ENCODE measurements at regions of chr16 and their contacts with region 1.

Region 1: DNA sequence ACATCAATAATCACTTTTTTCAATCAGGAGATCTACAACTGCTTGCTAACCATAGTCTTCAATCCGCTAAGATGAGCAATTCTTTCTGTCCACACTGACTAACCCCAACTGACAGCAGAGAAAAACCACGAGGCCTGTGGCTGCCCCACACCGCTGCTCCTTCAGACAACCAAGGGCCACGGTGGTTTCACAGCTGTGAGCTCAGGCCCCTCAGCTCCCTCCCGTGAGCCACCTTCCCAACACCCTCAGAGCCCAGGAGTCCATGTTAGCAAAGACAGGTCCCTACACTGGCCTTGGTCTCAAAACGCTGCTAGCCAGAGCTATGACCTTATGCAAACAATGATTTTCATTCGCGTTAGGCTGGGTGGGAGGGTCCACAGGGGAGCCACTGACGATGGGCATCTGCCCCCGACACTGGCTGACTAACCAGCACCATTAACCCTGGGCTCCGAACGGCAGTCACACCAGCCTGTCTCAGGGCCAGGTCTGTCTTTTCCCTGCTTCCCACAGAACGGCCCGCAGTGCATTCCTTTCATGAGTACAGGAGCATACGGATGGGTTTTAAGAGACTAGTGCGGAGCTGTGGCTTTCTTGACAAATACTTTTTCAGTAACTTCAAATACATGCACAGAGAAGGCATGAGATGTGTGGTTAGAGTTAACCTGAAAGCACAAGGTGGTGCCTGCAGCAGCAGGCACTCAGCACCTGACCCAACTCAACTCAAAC is 67.3 kb downstream of the ANKRD11 start:
- DNase-seq: no peak
- H3K4me3 ChIP-seq: no peak overlapping the region
- H3K27ac ChIP-seq: no peak overlapping the region
- H3K4me1 ChIP-seq: peaks cover 6 to 30% (median 17%) of the 10 kb centered on the region in 4 experiments; a peak in 6 of 7 replicates
- H3K27me3 ChIP-seq: no peaks in the 10 kb centered on the region
- CTCF ChIP-seq: no peak
- EP300 ChIP-seq: no peak
- POLR2A ChIP-seq: no peak
- RAD21 ChIP-seq: no peak

Region 2: DNA sequence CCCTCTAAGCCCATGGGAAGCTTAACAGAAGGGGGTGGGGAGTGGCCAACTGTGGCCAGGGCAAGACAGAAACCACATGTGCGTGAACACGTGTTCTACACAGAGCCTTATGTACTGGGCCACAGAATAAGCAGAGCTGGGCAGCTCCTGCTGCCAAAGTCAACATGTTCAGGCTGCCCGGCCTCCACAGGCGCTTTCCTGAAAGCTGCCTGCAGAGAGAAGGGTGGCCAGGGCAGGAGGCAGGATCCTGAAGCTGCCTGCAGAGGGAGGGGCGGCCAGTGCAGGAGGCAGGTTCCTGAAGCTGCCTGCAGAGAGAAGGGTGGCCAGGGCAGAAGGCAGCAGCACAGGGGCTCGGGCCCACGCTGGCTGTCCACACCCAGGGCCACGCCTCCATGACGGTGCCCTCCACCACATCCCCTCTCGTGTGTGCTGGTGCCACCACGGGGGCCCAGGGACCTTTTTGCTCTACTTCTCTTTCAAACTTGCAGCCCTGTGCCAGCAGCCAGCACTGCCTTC is 12.2 kb before region 1 on chr16:
- CTCF ChIA-PET with region 1: interaction called, 8 read pairs
- POLR2A ChIA-PET with region 1: interaction called, 10 read pairs
- DNase-seq: no peak
- H3K4me3 ChIP-seq: no peak overlapping the region
- H3K27ac ChIP-seq: no peak overlapping the region
- H3K4me1 ChIP-seq: peaks cover 2 to 45% (median 28%) of the 10 kb centered on the region in 4 experiments
- H3K27me3 ChIP-seq: no peaks in the 10 kb centered on the region
- CTCF ChIP-seq: no peak
- EP300 ChIP-seq: no peak
- POLR2A ChIP-seq: no peak
- RAD21 ChIP-seq: no peak

Region 3: DNA sequence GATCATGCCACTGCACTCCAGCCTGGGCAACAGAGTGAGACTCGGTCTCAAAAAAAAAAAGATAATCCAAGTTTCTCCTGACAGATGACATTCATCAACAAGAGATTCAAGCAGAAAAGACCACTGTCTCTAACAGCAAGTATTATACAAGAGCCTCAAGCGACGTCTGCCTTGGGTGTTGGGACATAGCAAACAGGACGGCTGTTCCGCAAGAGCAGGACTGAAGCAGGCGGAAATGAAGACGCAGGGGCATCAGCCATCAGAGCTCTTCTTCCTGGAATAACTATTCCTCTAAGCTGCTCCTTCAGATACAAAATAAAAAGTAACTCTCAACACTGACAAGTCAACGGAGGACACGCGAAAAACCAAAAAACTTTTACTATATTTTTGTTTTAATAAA is 13.3 kb after region 1 on chr16:
- CTCF ChIA-PET with region 1: interaction called, 6 read pairs
- POLR2A ChIA-PET with region 1: interaction called, 18 read pairs
- DNase-seq: no peak
- H3K4me3 ChIP-seq: no peak overlapping the region
- H3K27ac ChIP-seq: no peak overlapping the region
- H3K4me1 ChIP-seq: peaks cover 2 to 24% (median 5%) of the 10 kb centered on the region in 4 experiments; a peak in 6 of 7 replicates
- H3K27me3 ChIP-seq: no peaks in the 10 kb centered on the region
- CTCF ChIP-seq: no peak
- EP300 ChIP-seq: no peak
- POLR2A ChIP-seq: no peak
- RAD21 ChIP-seq: no peak

Region 4: GRCh38 chr16:89466920-89467319 is 43.9 kb after region 1 on chr16:
- CTCF ChIA-PET with region 1: interaction called, 12 read pairs
- POLR2A ChIA-PET with region 1: interaction called, 4 read pairs
- DNase-seq: no peak
- H3K4me3 ChIP-seq: no peak overlapping the region
- H3K27ac ChIP-seq: no peak overlapping the region
- H3K4me1 ChIP-seq: peaks cover 4 to 10% (median 7%) of the 10 kb centered on the region in 4 experiments; a peak in 5 of 7 replicates
- H3K27me3 ChIP-seq: no peaks in the 10 kb centered on the region
- CTCF ChIP-seq: no peak
- EP300 ChIP-seq: no peak
- POLR2A ChIP-seq: no peak
- RAD21 ChIP-seq: no peak

Region 5: GRCh38 chr16:89511374-89511773 is 88.3 kb after region 1 on chr16:
- CTCF ChIA-PET with region 1: no interaction called
- POLR2A ChIA-PET with region 1: no interaction called
- DNase-seq: no peak
- H3K4me3 ChIP-seq: no peak overlapping the region
- H3K27ac ChIP-seq: no peak overlapping the region
- H3K4me1 ChIP-seq: peaks cover 0 to 4% (median 0%) of the 10 kb centered on the region in 4 experiments; a peak in 4 of 7 replicates
- H3K27me3 ChIP-seq: peaks cover 0 to 4% (median 2%) of the 10 kb centered on the region in 4 experiments; a peak in 3 of 7 replicates
- CTCF ChIP-seq: no peak
- EP300 ChIP-seq: no peak
- POLR2A ChIP-seq: no peak
- RAD21 ChIP-seq: no peak

Measured in H1 (cell line).